BJ (cell line): ENCODE measurements at regions of chr16 and their contacts with region 1.

Region 1: DNA sequence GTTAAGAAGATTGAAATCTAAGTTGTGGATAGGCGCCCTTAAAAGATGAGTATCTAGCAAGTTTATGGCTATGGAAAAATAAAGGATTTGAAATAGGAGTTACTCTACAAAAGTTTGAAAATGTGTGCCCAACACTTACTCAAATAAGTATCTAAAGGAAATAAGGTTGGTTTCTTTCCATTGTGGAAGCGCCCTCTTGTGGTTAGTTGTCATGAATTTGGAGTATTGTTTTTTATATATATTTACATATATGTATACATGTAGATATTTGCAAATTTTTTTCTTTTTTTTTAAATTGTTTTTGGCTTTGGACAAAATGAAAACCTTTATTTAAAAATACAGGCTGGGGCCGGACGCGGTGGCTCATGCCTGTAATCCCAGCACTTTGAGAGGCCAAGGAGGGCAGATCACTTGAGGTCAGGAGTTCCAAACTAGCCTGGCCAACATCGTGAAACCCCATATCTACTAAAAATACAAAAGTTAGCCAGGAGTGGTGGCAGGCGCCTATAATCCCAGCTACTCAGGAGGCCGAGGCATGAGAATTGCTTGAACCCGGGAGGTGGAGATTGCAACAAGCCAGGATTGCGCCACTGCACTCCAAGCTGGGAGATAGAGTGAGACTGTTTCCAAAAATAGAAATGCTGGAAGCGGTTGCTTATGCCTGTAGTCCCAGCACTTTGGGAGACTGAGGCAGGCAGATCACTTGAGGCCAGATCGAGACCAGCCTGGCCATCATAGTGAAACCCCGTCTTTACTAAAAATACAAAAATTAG is 24.0 kb upstream of the VPS4A start:
- DNase-seq: no peak
- H3K4me3 ChIP-seq: no peak overlapping the region
- H3K27me3 ChIP-seq: no peaks in the 10 kb centered on the region
- CTCF ChIP-seq: peak; percentile 37; the same call in 1 of the 2 replicates

Region 2: GRCh38 chr16:69150146-69150865 is 136.8 kb before region 1 on chr16:
- CTCF ChIA-PET with region 1: interaction called, 98 read pairs
- POLR2A ChIA-PET with region 1: no interaction called
- DNase-seq: no peak
- H3K4me3 ChIP-seq: no peak overlapping the region
- H3K27me3 ChIP-seq: no peaks in the 10 kb centered on the region
- CTCF ChIP-seq: peak; percentile 73

Region 3: DNA sequence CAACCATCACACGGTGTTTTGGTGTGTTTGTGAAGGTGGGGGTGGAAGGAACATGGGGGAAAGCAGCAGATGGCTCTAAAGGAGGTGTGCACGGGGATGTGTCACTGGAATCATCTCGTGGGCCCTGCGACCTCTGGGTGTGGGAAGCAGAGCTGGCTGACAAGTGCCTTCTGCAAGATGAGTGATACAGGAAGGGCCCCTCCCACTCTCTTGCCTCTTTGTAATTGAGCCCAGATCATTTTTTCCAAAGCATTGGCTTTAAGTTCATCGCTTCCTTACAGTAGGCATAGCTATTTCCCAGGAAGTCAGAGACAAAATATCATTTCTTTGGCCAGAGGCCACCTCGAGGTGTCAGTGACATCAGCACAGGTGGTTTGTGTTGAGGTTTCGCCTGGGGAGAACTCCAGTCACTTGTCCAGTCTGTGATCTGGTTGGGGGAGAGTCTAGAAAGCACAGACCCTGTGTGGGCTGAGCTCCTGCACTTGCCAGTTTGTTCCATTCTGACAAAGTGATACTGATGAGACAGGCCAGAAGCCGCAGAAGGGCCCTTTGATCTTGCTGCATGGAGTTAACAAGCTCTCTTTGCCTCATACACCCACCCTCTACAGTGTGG is 120.8 kb before region 1 on chr16:
- CTCF ChIA-PET with region 1: interaction called, 3 read pairs
- POLR2A ChIA-PET with region 1: interaction called, 11 read pairs
- DNase-seq: no peak
- H3K4me3 ChIP-seq: no peak overlapping the region
- H3K27me3 ChIP-seq: no peaks in the 10 kb centered on the region
- CTCF ChIP-seq: no peak

Region 4: GRCh38 chr16:69186642-69187445 is 100.3 kb before region 1 on chr16 and contains the start of gene SNTB2:
- CTCF ChIA-PET with region 1: interaction called, 10 read pairs
- POLR2A ChIA-PET with region 1: no interaction called
- DNase-seq: no peak
- H3K4me3 ChIP-seq: peak within 1 kb of the TSS; percentile 78
- H3K27me3 ChIP-seq: no peaks in the 10 kb centered on the region
- CTCF ChIP-seq: no peak
- polyA plus RNA-seq, gene SNTB2: 43.1 and 50.5 TPM in 2 replicates

Region 5: GRCh38 chr16:69276148-69277115 is 10.7 kb before region 1 on chr16:
- CTCF ChIA-PET with region 1: interaction called, 13 read pairs
- POLR2A ChIA-PET with region 1: no interaction called
- DNase-seq: peak; percentile 87
- H3K4me3 ChIP-seq: peak overlapping the region; percentile 11; the same call in 1 of the 2 replicates
- H3K27me3 ChIP-seq: no peaks in the 10 kb centered on the region
- CTCF ChIP-seq: no peak